AG04450 (cell line): ENCODE measurements at regions of chr1 and their contacts with region 1.

Region 1: GRCh38 chr1:224851210-224851847 is 78.1 kb upstream of the DNAH14 start:
- DNase-seq: no peak
- H3K4me3 ChIP-seq: no peak overlapping the region
- H3K27ac ChIP-seq: no peak overlapping the region
- H3K27me3 ChIP-seq: no peaks in the 10 kb centered on the region
- CTCF ChIP-seq: peak; percentile 82

Region 2: GRCh38 chr1:224042557-224043118 is 808.7 kb before region 1 on chr1:
- CTCF ChIA-PET with region 1: no interaction called
- POLR2A ChIA-PET with region 1: no interaction called
- DNase-seq: no peak
- H3K4me3 ChIP-seq: no peak overlapping the region
- H3K27ac ChIP-seq: no peak overlapping the region
- H3K27me3 ChIP-seq: no peaks in the 10 kb centered on the region
- CTCF ChIP-seq: no peak

Region 3: GRCh38 chr1:224503161-224504118 is 347.9 kb before region 1 on chr1:
- CTCF ChIA-PET with region 1: interaction called, 16 read pairs
- POLR2A ChIA-PET with region 1: no interaction called
- DNase-seq: peak; percentile 52
- H3K4me3 ChIP-seq: 0 out of 2 replicates have a peak overlapping the region, but pooled peaks have one; percentile 20
- H3K27ac ChIP-seq: peak overlapping the region; percentile 82
- H3K27me3 ChIP-seq: no peaks in the 10 kb centered on the region
- CTCF ChIP-seq: peak; percentile 26; the same call in 1 of the 2 replicates

Region 4: GRCh38 chr1:224644553-224645154 is 206.7 kb before region 1 on chr1:
- CTCF ChIA-PET with region 1: interaction called, 82 read pairs
- POLR2A ChIA-PET with region 1: no interaction called
- DNase-seq: no peak
- H3K4me3 ChIP-seq: no peak overlapping the region
- H3K27ac ChIP-seq: no peak overlapping the region
- H3K27me3 ChIP-seq: no peaks in the 10 kb centered on the region
- CTCF ChIP-seq: peak; percentile 90

Region 5: DNA sequence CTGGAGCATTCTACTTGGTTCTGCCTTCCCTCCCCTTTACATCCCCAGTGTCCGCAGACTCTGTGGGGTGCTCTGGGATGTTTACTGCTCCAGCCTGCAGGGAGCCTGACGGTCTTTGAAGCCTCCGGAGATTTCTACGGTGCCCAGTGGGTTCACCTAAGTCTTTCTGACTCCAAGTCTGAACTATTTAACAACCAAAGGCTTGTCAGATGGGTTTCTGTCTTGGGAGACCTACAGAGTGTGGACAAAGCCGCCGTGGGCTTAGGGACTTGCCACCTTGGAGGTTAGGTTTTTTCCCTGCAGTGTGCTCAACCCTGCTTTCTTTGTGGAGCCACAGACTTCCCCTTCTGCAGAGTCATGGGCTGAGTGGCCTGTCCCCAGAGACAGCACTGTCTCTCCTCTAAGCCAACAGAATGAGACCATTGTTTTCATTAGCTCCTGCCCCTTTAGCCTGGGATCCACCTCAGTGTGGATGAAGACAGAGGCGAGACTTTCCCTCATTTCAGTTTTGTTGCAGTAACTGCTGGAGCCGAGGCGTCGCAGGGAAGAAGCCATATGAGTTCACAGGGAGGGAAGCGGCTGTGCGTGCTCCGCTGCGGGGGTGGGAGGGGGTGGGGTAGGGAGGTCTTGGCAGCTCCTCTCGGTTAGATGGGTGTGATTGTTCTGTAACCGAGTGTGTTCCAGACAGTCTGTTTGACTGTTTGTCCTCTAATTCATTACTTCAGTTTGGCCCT is 114.5 kb before region 1 on chr1:
- CTCF ChIA-PET with region 1: interaction called, 16 read pairs
- POLR2A ChIA-PET with region 1: no interaction called
- DNase-seq: no peak
- H3K4me3 ChIP-seq: no peak overlapping the region
- H3K27ac ChIP-seq: no peak overlapping the region
- H3K27me3 ChIP-seq: no peaks in the 10 kb centered on the region
- CTCF ChIP-seq: no peak

Region 6: DNA sequence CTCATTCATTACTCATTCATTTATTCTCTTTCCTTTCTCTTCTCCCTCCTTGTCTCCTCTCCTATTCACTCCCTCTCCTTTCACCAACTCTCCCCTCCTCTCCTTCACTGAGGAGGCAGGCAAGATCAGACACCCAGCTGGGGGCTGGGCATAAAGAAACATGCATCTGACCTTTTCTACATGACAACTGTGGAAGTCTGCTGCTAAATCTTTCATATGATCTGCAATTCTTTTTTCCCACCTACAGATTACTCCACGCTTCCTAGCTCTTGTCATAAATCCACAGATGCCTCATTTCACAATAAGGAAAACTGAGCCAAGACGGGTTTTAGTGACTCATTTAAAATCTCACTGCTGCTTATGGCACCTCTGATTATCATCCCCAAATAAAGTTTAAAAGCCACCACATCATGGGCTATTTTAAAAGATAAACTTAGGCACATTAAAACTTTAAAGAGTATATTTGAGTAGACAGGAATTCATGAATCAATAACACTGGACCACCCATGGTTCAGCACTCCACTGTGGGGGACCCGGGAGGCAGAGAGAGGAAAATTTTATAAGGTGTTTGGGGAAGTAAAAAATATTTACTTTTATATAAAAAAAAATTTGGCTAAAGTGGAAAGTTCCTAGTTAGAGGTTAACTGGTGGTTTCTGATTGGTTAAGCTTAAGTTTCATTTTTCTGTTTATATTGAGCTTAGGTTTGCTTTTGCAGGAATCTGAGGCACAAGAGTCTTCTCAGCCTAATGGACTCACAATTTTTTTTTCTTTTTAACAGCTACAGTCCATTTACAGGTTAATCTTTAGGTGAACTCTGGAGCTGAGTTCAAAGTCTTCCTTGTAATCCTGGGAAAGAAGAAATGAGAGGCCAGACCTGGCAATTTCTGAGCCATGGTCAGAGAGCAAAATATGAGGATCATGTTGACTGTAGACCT is 22.4 kb after region 1 on chr1:
- CTCF ChIA-PET with region 1: interaction called, 11 read pairs
- POLR2A ChIA-PET with region 1: no interaction called
- DNase-seq: no peak
- H3K4me3 ChIP-seq: no peak overlapping the region
- H3K27ac ChIP-seq: no peak overlapping the region
- H3K27me3 ChIP-seq: peaks cover 19% of the 10 kb centered on the region
- CTCF ChIP-seq: no peak

Region 7: DNA sequence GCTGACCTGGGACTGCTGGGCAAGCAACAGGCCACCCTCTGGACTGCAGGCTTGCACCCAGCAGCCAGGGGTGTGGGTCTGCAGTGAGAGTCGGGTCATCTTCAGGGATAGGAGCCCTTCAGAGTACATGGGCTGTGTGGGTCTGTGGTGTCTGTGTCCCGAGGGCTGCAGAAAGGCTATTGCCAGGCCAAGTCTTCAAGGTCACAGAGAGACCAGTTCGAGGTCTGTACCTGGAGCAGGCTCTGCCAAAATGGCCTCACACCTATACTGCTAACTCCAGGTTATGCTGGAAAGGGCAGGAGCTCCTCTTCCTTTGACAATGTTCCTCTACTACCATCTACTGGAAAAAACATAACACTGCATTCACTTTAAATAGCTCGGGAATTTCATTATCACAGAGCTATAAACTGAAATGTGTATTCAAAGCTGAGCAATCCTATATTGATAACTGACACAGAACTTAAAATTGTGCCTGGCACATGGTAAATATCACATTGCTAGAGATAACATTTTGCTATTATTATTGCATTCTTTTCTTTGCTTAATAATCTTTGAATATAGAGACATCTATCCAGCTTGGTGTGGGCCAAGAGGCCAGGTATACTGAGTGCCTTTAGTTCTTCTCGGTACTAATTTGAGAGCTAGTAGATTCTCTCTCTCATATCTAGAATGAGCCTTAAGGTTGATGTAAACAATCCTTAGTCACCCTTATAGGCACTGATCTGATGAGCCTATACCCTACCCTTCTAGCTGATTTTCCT is 71.3 kb after region 1 on chr1:
- CTCF ChIA-PET with region 1: interaction called, 34 read pairs
- POLR2A ChIA-PET with region 1: no interaction called
- DNase-seq: peak; percentile 1
- H3K4me3 ChIP-seq: no peak overlapping the region
- H3K27ac ChIP-seq: no peak overlapping the region
- H3K27me3 ChIP-seq: no peaks in the 10 kb centered on the region
- CTCF ChIP-seq: peak; percentile 82